ENCODE measurements at regions of chr3 and their contacts with region 1.

Region 1: GRCh38 chr3:22660606-22661005 is 542.5 kb upstream of the UBE2E2 start:
- DNase-seq: no peak
- H3K4me3 ChIP-seq: no peak overlapping the region
- H3K27ac ChIP-seq: no peak overlapping the region
- H3K4me1 ChIP-seq: no peaks in the 10 kb centered on the region
- H3K27me3 ChIP-seq: no peaks in the 10 kb centered on the region
- CTCF ChIP-seq: no peak
- EP300 ChIP-seq: no peak
- POLR2A ChIP-seq: no peak

Region 2: GRCh38 chr3:22634433-22634832 is 26.2 kb before region 1 on chr3:
- in situ Hi-C with region 1: no loop called
- intact Hi-C with region 1: loop called (anchors 1 kb)
- DNase-seq: no peak
- H3K4me3 ChIP-seq: no peak overlapping the region
- H3K27ac ChIP-seq: no peak overlapping the region
- H3K4me1 ChIP-seq: no peaks in the 10 kb centered on the region
- H3K27me3 ChIP-seq: no peaks in the 10 kb centered on the region
- CTCF ChIP-seq: no peak
- EP300 ChIP-seq: no peak
- POLR2A ChIP-seq: no peak

Region 3: DNA sequence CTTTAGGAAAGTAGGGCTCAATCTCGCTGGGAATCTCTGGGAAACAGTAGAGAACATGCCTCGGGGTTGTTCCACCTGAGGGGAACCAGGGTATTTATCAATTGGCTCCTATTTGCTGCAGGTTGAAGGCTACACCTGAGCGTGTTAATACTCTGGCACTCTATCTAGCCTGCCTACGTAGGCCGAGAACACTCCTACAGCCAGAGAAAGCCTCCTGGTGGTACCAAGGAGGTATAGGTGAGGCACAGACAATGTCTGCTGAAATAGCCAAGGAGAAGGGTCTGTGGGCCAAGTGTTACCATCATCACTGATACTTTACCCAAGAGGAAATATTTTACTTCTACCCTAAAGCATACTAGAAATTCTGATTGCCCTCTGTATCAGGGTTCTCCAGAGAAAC is 201.5 kb after region 1 on chr3:
- in situ Hi-C with region 1: no loop called
- intact Hi-C with region 1: no loop called
- DNase-seq: no peak
- H3K4me3 ChIP-seq: no peak overlapping the region
- H3K27ac ChIP-seq: no peak overlapping the region
- H3K4me1 ChIP-seq: no peaks in the 10 kb centered on the region
- H3K27me3 ChIP-seq: no peaks in the 10 kb centered on the region
- CTCF ChIP-seq: no peak
- EP300 ChIP-seq: no peak
- POLR2A ChIP-seq: no peak

Region 4: GRCh38 chr3:22939349-22939748 is 278.7 kb after region 1 on chr3:
- in situ Hi-C with region 1: no loop called
- intact Hi-C with region 1: no loop called
- DNase-seq: no peak
- H3K4me3 ChIP-seq: no peak overlapping the region
- H3K27ac ChIP-seq: no peak overlapping the region
- H3K4me1 ChIP-seq: no peaks in the 10 kb centered on the region
- H3K27me3 ChIP-seq: no peaks in the 10 kb centered on the region
- CTCF ChIP-seq: no peak
- EP300 ChIP-seq: no peak
- POLR2A ChIP-seq: no peak